HepG2 (cell line): ENCODE measurements at regions of chrX and their contacts with region 1.

Region 1: GRCh38 chrX:30673127-30673796 is 20.0 kb downstream of the GK start:
- DNase-seq: no peak
- ATAC-seq: no peak
- H3K4me3 ChIP-seq: no peak overlapping the region
- H3K27ac ChIP-seq: no peak overlapping the region
- H3K4me1 ChIP-seq: peaks cover 23% of the 10 kb centered on the region
- H3K27me3 ChIP-seq: no peaks in the 10 kb centered on the region
- CTCF ChIP-seq: no peak
- EP300 ChIP-seq: no peak
- POLR2A ChIP-seq: no peak
- RAD21 ChIP-seq: no peak

Region 2: GRCh38 chrX:30635630-30636029 is 37.6 kb before region 1 on chrX:
- CTCF ChIA-PET with region 1: interaction called, 4 read pairs
- POLR2A ChIA-PET with region 1: no interaction called
- in situ Hi-C with region 1: no loop called
- intact Hi-C with region 1: loop called (anchors 5 kb)
- DNase-seq: no peak
- ATAC-seq: no peak
- H3K4me3 ChIP-seq: no peak overlapping the region
- H3K27ac ChIP-seq: no peak overlapping the region
- H3K4me1 ChIP-seq: peaks cover 29% of the 10 kb centered on the region
- H3K27me3 ChIP-seq: no peaks in the 10 kb centered on the region
- CTCF ChIP-seq: 0 out of 2 replicates have a peak, but pooled peaks have one; percentile 26
- EP300 ChIP-seq: no peak
- POLR2A ChIP-seq: no peak
- RAD21 ChIP-seq: peak; percentile 24; the same call in 1 of the 2 replicates